ENCODE measurements at regions of chr18 and their contacts with region 1.

Region 1: DNA sequence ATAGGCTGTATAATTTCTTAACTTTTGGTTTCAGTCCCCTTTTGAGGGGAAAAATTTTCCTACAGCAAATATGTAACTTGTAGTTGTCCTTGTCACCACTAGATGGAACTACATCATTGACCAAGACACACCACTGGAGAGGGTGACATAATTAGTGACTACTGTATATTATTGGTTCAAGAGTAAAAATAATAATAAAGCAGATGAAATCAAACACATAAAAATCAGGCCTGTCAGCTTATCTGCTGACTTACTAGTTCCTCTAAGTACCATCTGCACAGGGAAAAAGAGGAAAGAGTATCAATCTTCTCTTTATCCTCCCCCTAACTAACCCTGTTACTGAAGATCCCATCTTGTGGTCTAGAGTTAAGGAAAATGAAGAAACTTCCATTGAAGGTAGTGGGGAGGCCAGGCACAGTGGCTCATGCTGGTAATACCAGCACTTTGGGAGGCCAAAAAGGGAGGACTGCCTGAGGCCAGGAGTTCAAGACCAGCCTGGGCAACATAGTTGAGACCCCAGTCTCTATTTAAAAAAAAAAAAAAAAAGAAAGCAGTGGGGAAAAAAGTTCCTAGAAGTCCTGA is 29.6 kb upstream of the ENOSF1 start:
- DNase-seq: no peak
- ATAC-seq: peak; percentile 62
- H3K4me3 ChIP-seq: no peak overlapping the region
- H3K27ac ChIP-seq: no peak overlapping the region
- H3K4me1 ChIP-seq: no peaks in the 10 kb centered on the region
- H3K27me3 ChIP-seq: no peaks in the 10 kb centered on the region
- CTCF ChIP-seq: peak; percentile 30 to 82 (median 78)
- POLR2A ChIP-seq: no peak

Region 2: GRCh38 chr18:830315-830901 is 88.4 kb after region 1 on chr18:
- intact Hi-C with region 1: loop called (anchors 5 kb)
- DNase-seq: no peak
- ATAC-seq: peak; percentile 35
- H3K4me3 ChIP-seq: no peak overlapping the region
- H3K27ac ChIP-seq: no peak overlapping the region
- H3K4me1 ChIP-seq: no peaks in the 10 kb centered on the region
- H3K27me3 ChIP-seq: no peaks in the 10 kb centered on the region
- CTCF ChIP-seq: no peak
- POLR2A ChIP-seq: no peak

Region 3: DNA sequence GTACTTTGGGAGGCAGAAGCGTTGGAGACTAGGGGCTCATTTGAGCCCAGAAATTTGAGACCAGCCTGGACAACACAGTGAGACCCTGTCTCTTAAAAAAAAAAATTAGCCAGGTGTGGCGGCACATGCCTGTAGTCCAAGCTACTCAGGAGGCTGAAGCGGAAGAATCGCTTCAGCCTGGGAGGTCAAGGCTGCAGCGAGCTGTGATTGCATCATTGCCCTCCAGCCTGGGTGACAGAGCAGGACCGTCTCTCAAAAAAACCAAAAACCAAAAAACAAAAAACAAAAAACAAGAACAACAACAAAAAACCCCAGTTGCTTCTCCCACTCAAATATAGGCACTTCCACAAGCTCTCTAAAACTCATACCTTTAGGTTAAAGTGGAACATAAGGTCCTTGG is 135.2 kb after region 1 on chr18:
- intact Hi-C with region 1: no loop called
- DNase-seq: no peak
- ATAC-seq: no peak
- H3K4me3 ChIP-seq: no peak overlapping the region
- H3K27ac ChIP-seq: no peak overlapping the region
- H3K4me1 ChIP-seq: no peaks in the 10 kb centered on the region
- H3K27me3 ChIP-seq: no peaks in the 10 kb centered on the region
- CTCF ChIP-seq: no peak
- POLR2A ChIP-seq: no peak

Measured in body of pancreas (tissue), 4 donors.